AG04450 (cell line): ENCODE measurements at regions of chr17 and their contacts with region 1.

Region 1: DNA sequence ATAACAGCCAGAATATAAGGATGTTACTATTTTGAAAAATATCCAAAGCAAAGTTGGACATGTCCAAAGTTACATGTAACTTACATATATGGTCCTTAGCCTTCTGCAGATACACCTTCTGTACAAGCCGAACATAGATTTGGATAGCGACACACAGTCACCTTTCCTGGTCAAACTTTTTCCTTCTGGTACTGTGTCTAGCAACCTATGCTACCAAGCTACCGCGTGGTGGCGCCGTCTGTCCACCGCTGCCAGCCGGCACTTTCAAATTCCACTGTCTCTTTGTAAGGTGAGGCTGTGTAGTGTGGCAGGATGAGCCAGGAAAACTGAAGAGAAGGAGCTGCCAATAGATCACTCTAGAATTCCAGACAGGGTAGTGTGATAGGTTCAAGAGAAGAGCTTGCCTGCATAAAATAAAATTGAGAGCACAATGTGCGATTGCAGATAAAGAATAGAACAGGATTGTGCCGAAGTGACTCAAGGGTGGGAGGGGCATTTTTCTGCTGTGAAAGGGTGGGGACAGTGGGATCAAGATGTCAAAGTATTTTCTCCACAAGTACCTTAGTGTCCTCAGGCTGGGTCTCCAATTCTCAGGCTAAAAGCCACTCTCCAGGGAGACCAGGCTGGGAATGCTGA is 366.9 kb downstream of the SLC39A11 start:
- DNase-seq: no peak
- H3K4me3 ChIP-seq: no peak overlapping the region
- H3K27ac ChIP-seq: no peak overlapping the region
- H3K27me3 ChIP-seq: no peaks in the 10 kb centered on the region
- CTCF ChIP-seq: peak; percentile 98

Region 2: DNA sequence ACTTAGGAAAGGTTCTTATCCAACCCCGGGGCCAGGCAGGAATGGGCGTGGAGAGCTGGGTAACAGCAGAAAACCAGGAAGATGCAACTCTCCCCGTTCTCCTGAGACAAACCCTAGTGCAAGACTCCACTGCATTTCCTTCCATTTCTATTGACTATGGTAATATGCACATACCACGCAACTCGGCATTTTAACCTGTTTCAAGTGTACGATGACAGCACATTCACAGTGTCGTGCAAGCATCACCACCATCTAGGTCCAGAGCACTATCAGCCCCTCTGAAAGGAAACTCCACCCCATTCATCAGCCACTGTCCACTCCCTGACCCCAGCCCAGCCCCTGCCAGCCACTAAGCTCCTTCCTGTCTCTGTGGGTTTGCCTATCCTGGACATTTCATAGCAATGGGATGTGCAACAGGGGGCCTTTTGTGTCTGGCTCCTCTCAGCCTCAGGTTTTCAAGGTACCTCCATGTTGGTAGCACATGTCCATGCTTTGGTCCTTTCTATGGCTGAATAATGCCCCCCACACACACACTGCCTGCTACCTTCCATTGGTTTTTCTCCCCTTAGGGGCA is 162.8 kb before region 1 on chr17:
- CTCF ChIA-PET with region 1: interaction called, 242 read pairs
- POLR2A ChIA-PET with region 1: no interaction called
- DNase-seq: no peak
- H3K4me3 ChIP-seq: no peak overlapping the region
- H3K27ac ChIP-seq: no peak overlapping the region
- H3K27me3 ChIP-seq: no peaks in the 10 kb centered on the region
- CTCF ChIP-seq: no peak

Region 3: DNA sequence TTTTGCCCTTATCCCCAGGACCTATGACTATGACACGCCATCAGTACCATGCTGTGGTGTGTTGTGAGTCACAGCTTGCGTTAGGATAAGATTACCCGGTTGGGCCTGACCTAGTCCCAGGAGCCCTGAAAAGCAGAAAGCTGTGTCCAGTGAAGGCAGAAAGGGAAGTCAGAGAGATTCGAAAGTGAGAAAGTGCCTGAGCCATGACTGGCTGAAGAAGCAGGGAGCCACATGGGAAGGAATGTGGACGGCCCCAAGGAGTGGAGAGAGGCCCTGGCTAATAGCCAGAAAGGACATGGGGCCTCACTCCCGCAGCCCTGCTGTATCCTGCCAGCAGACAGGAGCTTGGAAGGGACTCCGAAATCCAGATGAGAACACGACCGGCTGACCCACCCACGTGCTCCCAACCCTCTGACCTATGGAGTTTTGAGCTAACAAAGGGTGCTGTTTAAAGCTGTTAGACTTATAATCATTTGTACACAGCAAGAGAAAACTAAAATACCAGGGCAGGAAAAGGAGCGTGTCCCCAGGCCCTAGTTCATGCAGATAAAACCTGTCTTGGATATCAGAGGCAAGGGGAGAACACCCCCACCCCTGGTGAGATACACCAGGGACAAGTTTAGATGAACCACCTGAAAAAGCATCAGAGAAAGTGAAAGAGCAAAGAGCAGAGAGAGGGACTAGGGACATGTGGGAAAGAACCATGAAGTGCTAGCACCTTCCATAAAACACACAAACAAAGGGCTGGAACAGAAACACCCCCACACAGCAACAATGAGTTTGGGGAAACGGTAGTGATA is 251.6 kb after region 1 on chr17:
- CTCF ChIA-PET with region 1: interaction called, 11 read pairs
- POLR2A ChIA-PET with region 1: no interaction called
- DNase-seq: peak; percentile 68
- H3K4me3 ChIP-seq: no peak overlapping the region
- H3K27ac ChIP-seq: peak overlapping the region; percentile 95
- H3K27me3 ChIP-seq: no peaks in the 10 kb centered on the region
- CTCF ChIP-seq: no peak

Region 4: GRCh38 chr17:73156166-73156840 is 430.8 kb after region 1 on chr17:
- CTCF ChIA-PET with region 1: interaction called, 35 read pairs
- POLR2A ChIA-PET with region 1: no interaction called
- DNase-seq: peak; percentile 27
- H3K4me3 ChIP-seq: no peak overlapping the region
- H3K27ac ChIP-seq: no peak overlapping the region
- H3K27me3 ChIP-seq: peaks cover 15% of the 10 kb centered on the region
- CTCF ChIP-seq: peak; percentile 85

Region 5: GRCh38 chr17:73192894-73193701 is 467.5 kb after region 1 on chr17 and contains the start of gene COG1:
- CTCF ChIA-PET with region 1: interaction called, 243 read pairs
- POLR2A ChIA-PET with region 1: interaction called, 10 read pairs
- DNase-seq: peak; percentile 59
- H3K4me3 ChIP-seq: peak within 1 kb of the TSS; percentile 93
- H3K27ac ChIP-seq: peak within 1 kb of the TSS; percentile 84
- H3K27me3 ChIP-seq: no peaks in the 10 kb centered on the region
- CTCF ChIP-seq: no peak
- polyA plus RNA-seq, gene COG1: 30.2 and 36.9 TPM in 2 replicates

Region 6: DNA sequence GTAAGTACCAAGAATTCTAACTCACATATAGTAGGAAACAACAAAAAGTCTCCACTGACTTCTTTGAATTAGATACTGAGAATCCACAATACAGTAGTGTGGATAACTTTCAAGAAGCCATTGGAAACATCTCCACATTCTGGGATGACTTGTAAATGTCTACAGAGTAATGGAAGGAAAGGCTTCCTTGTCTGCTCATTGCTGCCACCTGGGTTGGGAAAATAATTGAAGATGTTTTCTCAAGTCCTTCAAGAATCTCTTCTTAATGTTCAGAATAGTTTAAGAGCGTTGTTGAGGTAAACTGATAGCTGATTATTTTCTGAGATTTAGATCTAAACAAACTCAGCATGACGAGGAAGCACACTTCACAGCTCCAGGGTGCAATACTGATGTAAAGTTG is 522.2 kb after region 1 on chr17:
- CTCF ChIA-PET with region 1: interaction called, 49 read pairs
- POLR2A ChIA-PET with region 1: no interaction called
- DNase-seq: no peak
- H3K4me3 ChIP-seq: no peak overlapping the region
- H3K27ac ChIP-seq: no peak overlapping the region
- H3K27me3 ChIP-seq: no peaks in the 10 kb centered on the region
- CTCF ChIP-seq: no peak; the same call in 1 of the 2 replicates